Prostate gland (tissue), 2 donors: ENCODE measurements at regions of chr2 and their contacts with region 1.

Region 1: GRCh38 chr2:202375609-202376408 is at the start of gene BMPR2:
- DNase-seq: peak; percentile 92
- H3K4me3 ChIP-seq: peak within 1 kb of the TSS; percentile 84 to 97
- H3K27ac ChIP-seq: peak within 1 kb of the TSS; percentile 95 to 99
- H3K4me1 ChIP-seq: no peaks in the 10 kb centered on the region
- H3K27me3 ChIP-seq: no peaks in the 10 kb centered on the region
- CTCF ChIP-seq: peak in 1 of 4 experiments; percentile 12
- POLR2A ChIP-seq: peak; percentile 84
- total RNA-seq, gene BMPR2: 41.1 to 69.9 TPM

Region 2: DNA sequence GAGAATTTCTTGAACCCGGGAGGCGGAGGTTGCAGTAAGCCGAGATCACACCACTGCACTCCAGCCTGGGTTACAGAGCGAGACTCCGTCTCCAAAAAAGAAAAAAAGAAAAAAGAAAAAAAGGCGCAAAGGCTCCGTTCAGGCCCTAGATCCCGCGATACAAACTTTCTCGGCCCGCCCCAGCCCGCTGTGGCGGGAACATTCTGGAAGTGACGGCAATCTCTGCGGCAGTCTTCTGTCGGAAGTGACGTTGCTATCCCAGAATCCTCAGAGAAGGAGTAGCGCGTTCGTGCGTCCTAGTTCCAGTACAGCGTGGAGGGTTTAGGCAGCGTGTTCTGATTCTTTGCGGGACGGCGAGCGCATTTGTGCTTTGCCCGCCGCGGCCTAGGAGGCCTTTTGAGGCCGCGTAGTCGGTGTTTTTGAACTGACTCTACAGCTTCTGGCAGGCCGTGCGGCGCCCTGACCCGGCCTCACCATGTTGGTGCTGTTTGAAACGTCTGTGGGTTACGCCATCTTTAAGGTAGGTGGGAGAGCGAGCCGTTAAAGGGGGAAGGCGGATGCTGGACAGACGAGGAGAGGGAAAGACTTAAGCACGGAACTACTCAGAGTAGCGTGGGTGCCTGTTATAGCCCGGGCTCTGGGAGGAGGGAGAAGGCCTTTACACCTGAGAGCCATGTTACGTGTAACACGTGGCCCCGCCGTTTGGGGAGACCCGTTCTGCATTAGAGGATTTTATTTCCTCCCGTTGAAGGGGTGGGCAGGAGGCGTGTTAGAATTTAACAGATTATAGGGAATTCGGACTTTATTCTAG is 110.1 kb before region 1 on chr2 and contains the start of gene NOP58:
- intact Hi-C with region 1: loop called (anchors 5 kb)
- DNase-seq: peak; percentile 96
- H3K4me3 ChIP-seq: peak within 1 kb of the TSS; percentile 80 to 90
- H3K27ac ChIP-seq: peak within 1 kb of the TSS; percentile 97 to 99
- H3K4me1 ChIP-seq: no peaks in the 10 kb centered on the region
- H3K27me3 ChIP-seq: no peaks in the 10 kb centered on the region
- CTCF ChIP-seq: no peak
- POLR2A ChIP-seq: peak; percentile 97
- total RNA-seq, gene NOP58: 47.6 to 73.2 TPM

Region 3: DNA sequence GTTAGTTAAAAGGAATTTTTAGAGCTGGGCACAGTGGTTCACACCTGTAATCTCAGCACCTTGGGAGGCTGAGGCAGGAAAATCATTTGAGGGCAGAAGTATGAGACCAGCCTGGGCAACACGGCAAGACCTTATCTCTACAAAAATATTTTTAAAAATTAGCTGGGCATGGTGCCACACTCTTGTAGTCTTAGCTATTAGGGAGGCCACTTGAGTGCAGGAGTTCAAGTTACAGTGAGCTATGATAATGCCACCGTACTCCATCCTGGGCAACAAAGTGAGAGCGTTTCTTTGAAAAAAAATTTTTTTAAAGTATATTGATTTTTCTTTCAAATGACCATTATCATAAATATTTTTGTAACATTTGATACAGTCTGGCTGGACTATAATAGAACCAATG is 165.3 kb after region 1 on chr2:
- intact Hi-C with region 1: loop called (anchors 10 kb)
- DNase-seq: no peak
- H3K4me3 ChIP-seq: no peak overlapping the region
- H3K27ac ChIP-seq: no peak overlapping the region
- H3K4me1 ChIP-seq: no peaks in the 10 kb centered on the region
- H3K27me3 ChIP-seq: no peaks in the 10 kb centered on the region
- CTCF ChIP-seq: no peak
- POLR2A ChIP-seq: no peak

Region 4: DNA sequence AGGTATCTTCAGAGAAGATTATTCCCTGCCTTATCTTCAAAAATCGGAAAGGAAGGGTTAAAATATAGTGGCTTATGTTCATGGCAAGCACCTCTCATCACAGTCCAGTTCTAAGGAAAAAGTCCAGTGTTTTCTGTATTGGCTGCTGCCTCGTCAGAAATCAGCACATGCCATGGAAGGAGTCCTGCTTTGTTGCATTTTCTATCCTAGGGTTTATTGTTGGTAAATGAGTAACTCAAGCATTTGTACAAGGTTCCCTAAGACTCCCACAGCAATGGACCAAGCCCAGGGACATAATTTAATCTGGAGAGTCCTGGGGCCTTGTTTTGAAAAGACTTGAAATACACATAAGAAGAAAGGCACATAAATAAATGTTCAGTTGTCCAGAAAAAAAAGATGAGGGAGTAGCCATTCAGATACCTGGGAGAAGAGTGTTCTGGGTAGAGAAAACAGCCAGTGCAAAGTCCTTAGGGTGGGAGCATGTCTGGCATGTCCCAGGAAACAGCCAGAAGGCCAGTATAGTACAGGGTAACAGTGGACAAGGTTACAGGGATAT is 665.2 kb after region 1 on chr2:
- intact Hi-C with region 1: no loop called
- DNase-seq: no peak
- H3K4me3 ChIP-seq: no peak overlapping the region
- H3K27ac ChIP-seq: no peak overlapping the region
- H3K4me1 ChIP-seq: no peaks in the 10 kb centered on the region
- H3K27me3 ChIP-seq: no peaks in the 10 kb centered on the region
- CTCF ChIP-seq: no peak
- POLR2A ChIP-seq: no peak